Left cardiac atrium (tissue), 4 donors: ENCODE measurements at regions of chr6 and their contacts with region 1.

Region 1: DNA sequence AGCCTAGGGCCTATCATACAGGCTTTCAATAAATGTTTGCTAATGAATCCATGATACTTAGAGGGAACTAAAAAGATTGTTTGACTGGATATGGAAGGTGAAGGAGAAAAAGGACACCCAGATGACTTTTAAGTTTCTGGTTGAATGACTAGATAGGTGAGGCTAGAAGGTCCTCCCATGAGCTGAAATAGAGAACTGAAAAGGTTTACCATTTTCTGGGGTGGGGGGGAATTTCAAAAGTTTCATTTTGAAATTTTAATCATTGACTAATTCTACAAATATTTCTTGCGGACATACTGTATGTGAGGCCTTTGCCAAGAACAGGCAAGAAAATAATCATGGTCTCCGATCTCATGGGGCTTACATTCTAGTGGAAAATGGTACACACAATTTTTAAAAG is 17.9 kb upstream of the ZBTB2 start:
- DNase-seq: no peak
- ATAC-seq: no peak

Region 2: GRCh38 chr6:151357758-151358436 is 51.4 kb before region 1 on chr6:
- intact Hi-C with region 1: no loop called
- DNase-seq: no peak
- ATAC-seq: no peak

Region 3: DNA sequence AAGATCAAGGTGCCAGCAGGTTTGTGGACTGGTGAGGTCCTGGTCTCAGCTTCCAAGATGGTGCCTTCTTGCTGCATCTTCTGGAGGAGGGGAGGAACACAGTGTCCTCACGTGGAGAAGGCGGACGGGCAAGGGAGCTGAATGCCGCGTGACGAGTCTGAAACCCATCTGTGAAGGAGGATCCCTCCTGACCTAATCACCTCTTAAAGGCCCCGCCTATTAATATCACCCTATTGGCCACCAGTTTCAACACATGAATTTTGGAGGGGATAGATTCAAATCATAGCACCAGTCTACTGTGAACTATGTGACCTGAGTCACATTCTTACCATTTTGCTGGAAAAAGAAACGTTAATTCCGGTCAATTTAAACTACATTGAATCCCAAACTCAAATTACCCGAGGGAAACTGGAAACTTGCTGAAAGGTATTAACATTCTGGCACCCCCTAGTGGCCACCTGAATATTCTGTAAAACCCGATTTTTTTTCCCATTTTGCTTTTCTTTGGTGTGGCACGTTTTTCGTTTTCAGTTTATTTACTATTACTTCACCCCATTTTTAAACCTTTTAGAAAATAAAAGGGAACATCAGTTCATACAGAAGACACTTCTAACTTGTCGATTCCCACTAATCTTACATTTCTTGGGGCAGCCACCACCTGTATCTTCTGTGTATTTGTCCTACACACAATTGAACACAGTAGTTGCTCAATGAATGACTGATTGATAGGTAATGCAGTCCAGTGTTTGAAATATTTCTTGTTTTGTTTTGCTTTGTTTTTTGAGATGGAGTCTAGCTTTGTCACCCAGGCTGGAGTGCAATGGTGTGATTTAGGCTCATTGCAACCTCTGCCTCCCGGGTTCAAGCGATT is 66.6 kb after region 1 on chr6:
- intact Hi-C with region 1: loop called in 1 of 2 experiments (anchors 5 kb)
- DNase-seq: no peak
- ATAC-seq: peak in 1 of 2 donors; percentile 69

Region 4: DNA sequence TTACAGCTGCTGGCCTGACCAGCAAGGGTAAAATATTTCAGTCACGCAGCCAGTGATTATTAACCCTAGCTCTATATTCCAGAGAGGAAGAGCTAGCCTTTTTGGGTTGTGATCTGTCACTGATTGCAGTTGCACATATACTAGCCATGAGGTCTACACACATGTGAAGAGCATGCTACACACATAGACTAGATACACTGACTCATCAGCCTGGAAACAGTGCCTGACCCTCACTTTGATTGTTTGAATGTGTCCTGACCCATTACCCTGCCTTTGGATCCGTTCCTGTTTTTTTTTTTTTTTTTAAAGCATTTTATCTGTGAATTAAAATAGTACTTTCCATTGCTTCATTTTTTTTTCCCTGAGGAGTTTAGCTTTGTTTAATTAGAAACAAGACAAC is 449.0 kb after region 1 on chr6:
- intact Hi-C with region 1: no loop called
- DNase-seq: no peak
- ATAC-seq: no peak